H1 (cell line): ENCODE measurements at regions of chr22 and their contacts with region 1.

Region 1: DNA sequence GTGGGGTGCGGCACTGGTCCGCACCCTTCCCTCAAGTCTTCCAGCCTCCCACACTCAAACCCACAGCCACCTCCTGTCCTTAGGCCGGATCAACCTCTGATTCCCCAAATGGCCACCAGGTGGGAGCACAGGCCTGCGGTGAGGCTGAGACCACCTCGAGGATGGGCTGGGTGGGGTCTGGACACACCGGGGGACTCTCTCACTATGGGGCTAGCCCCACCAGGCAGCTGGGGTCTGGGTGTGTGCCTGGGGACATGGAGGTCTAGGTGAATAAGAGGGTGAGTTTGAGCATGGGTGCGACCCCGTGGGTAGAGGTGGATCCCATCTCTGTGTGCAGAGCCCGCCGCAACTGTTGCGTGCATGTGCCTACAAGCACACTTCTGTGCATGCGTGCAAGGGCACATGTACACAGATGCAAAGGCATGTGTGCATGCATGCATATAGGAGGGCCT is 32.6 kb downstream of the MYO18B start:
- DNase-seq: peak in 1 of 2 experiments; percentile 86
- H3K4me3 ChIP-seq: no peak overlapping the region
- H3K27ac ChIP-seq: no peak overlapping the region
- H3K4me1 ChIP-seq: no peaks in the 10 kb centered on the region
- H3K27me3 ChIP-seq: no peaks in the 10 kb centered on the region
- CTCF ChIP-seq: peak; percentile 90 to 93 (median 90)
- EP300 ChIP-seq: no peak
- POLR2A ChIP-seq: no peak
- RAD21 ChIP-seq: peak; percentile 97

Region 2: DNA sequence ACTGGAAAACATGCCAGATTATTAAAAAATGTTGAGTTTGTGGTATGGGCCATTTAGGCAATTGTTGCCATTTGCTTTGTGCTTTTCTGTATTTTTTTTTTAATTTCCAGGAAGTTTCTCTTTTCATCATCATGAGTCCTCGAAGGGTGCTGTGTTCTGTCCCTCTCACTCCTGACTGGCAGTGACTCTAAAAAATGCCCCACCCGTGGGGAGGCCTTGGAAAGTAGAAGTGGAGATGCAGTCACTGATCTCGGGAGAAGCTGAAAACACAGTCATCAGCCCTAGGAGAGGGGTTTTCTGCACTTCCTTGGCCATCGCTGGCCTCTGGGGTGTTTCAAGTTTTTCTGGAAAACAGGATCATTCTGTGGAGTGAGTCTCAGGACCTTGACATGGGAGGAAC is 308.7 kb before region 1 on chr22:
- CTCF ChIA-PET with region 1: interaction called, 32 read pairs
- POLR2A ChIA-PET with region 1: interaction called, 5 read pairs
- DNase-seq: no peak
- H3K4me3 ChIP-seq: no peak overlapping the region
- H3K27ac ChIP-seq: no peak overlapping the region
- H3K4me1 ChIP-seq: no peaks in the 10 kb centered on the region
- H3K27me3 ChIP-seq: no peaks in the 10 kb centered on the region
- CTCF ChIP-seq: no peak
- EP300 ChIP-seq: no peak
- POLR2A ChIP-seq: no peak
- RAD21 ChIP-seq: no peak

Region 3: DNA sequence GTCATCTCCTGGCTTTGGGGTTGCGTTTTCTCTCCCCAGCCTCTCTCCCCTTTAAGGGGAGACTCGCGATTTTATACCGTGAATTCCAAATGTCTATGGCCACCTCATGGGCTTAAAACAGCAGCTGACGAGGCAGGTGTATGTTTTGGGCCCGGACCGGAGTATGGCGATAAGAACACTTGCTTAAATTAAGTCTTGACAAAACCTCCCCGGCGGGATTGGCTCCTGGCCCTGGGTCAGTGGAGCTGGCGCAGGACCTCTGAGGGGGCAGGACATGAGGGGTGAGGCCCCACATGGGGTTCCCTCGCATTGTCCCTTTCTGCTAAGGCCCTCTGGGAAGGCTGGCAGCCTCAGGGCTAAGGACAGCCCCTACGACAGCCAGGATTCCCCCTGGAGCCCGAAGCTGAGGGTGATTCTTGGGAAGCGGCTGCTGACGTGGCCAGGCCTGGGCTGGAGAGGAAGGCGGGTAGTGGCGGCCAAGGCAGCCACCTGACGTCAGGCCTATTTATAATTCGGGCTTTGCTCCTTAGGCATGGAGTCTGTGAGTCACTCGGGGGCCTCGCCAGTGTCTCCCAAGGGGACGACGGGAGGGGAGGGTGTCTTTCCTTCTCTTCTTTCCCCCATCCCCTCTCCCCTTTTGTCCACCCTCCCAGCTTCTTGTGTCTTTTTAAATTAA is 19.9 kb before region 1 on chr22:
- CTCF ChIA-PET with region 1: interaction called, 24 read pairs
- POLR2A ChIA-PET with region 1: no interaction called
- DNase-seq: no peak
- H3K4me3 ChIP-seq: no peak overlapping the region
- H3K27ac ChIP-seq: no peak overlapping the region
- H3K4me1 ChIP-seq: no peaks in the 10 kb centered on the region
- H3K27me3 ChIP-seq: no peaks in the 10 kb centered on the region
- CTCF ChIP-seq: no peak
- EP300 ChIP-seq: no peak
- POLR2A ChIP-seq: no peak
- RAD21 ChIP-seq: no peak

Region 4: GRCh38 chr22:25759825-25760231 is 14.8 kb before region 1 on chr22:
- CTCF ChIA-PET with region 1: interaction called, 31 read pairs
- POLR2A ChIA-PET with region 1: no interaction called
- DNase-seq: no peak
- H3K4me3 ChIP-seq: no peak overlapping the region
- H3K27ac ChIP-seq: no peak overlapping the region
- H3K4me1 ChIP-seq: no peaks in the 10 kb centered on the region
- H3K27me3 ChIP-seq: no peaks in the 10 kb centered on the region
- CTCF ChIP-seq: no peak
- EP300 ChIP-seq: no peak
- POLR2A ChIP-seq: no peak
- RAD21 ChIP-seq: no peak

Region 5: DNA sequence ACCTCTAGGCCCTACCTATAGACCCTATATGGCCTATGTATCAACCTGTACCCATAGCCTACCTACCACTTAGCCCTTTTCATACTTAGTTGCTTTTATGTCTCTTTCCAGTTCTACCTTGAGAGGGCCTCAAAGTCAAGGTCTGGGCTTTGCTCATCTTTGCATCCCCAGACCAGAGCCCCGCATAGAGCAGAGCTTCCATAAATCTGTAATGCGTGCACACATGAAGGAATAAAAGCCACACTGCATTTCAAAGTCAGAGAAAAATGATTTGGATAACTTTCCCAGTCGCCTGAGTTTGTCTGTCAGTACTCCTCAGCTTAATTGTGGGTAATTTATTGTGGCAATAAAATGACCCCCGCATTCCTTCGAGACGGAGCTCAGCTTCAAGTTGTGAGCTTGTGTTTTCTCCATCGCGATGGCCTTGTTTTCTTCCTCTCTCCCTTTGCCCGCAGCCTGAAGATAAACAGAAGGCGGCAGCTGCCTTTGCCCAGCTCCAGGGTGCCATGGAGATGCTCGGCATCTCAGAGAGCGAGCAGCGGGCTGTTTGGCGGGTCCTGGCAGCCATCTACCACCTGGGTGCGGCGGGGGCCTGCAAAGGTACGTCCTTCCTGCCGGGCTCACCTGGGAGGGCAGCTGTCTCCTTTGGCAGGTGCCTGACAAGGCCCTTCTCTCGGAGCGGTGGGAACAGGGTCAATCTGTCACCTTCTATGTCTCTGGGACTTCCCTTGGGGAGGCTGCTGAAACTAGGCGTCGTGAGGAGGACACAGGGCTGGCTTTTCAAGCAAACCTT is 23.1 kb after region 1 on chr22:
- CTCF ChIA-PET with region 1: interaction called, 10 read pairs
- POLR2A ChIA-PET with region 1: no interaction called
- DNase-seq: no peak
- H3K4me3 ChIP-seq: no peak overlapping the region
- H3K27ac ChIP-seq: no peak overlapping the region
- H3K4me1 ChIP-seq: no peaks in the 10 kb centered on the region
- H3K27me3 ChIP-seq: no peaks in the 10 kb centered on the region; a peak in 1 of 7 replicates
- CTCF ChIP-seq: no peak
- EP300 ChIP-seq: no peak
- POLR2A ChIP-seq: no peak
- RAD21 ChIP-seq: no peak

Region 6: GRCh38 chr22:25804676-25805075 is 30.1 kb after region 1 on chr22:
- CTCF ChIA-PET with region 1: interaction called, 11 read pairs
- POLR2A ChIA-PET with region 1: no interaction called
- DNase-seq: no peak
- H3K4me3 ChIP-seq: no peak overlapping the region
- H3K27ac ChIP-seq: no peak overlapping the region
- H3K4me1 ChIP-seq: no peaks in the 10 kb centered on the region
- H3K27me3 ChIP-seq: no peaks in the 10 kb centered on the region; a peak in 1 of 7 replicates
- CTCF ChIP-seq: no peak
- EP300 ChIP-seq: no peak
- POLR2A ChIP-seq: no peak
- RAD21 ChIP-seq: no peak

Region 7: DNA sequence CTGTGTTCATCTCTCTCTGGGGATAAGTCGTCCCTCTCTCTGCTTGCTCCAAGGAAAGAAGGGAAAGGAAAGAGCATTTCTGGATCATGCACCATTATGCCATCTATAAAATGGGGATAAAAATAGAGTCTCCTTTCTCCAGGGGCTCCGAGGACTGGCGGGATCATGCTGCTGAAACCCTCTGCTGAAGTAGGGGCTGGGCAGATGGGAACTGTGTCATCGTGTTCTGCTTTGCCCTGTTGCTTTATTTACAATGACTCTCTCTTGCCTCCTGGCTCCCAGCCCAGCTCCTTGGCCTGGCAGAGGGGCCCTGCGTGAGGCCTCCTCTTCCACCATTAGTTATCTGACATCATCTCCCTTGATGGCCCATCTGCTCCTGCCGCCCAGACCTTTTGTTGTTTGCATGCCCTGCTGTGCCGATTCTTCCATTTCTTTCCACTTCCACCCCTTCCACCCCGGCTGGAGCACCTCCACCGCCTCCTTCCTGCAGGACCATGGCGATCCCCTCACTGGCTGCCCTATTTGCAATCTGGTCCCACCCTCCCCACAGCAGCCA is 168.3 kb after region 1 on chr22:
- CTCF ChIA-PET with region 1: no interaction called
- POLR2A ChIA-PET with region 1: no interaction called
- DNase-seq: no peak
- H3K4me3 ChIP-seq: no peak overlapping the region
- H3K27ac ChIP-seq: no peak overlapping the region
- H3K4me1 ChIP-seq: peaks cover 0 to 13% (median 4%) of the 10 kb centered on the region in 4 experiments; a peak in 5 of 7 replicates
- H3K27me3 ChIP-seq: no peaks in the 10 kb centered on the region; a peak in 1 of 7 replicates
- CTCF ChIP-seq: no peak
- EP300 ChIP-seq: no peak
- POLR2A ChIP-seq: no peak
- RAD21 ChIP-seq: no peak